Dorsolateral prefrontal cortex (tissue), 120 donors: ENCODE measurements at regions of chr16 and their contacts with region 1.

Region 1: GRCh38 chr16:89330177-89330856 is 112.8 kb downstream of the ZNF778 start:
- DNase-seq: peak in 2 of 10 donors; percentile 25 to 42
- H3K4me3 ChIP-seq: peak overlapping the region in 18 of 59 donors; percentile 3 to 35 (median 20)
- H3K27ac ChIP-seq: peak overlapping the region in 15 of 59 donors; percentile 5 to 72 (median 49)
- H3K27me3 ChIP-seq: no peaks in the 10 kb centered on the region
- CTCF ChIP-seq: no peak

Region 2: GRCh38 chr16:89374393-89374960 is 44.2 kb after region 1 on chr16:
- intact Hi-C with region 1: loop called in 1 of 2 experiments (anchors 5 kb)
- DNase-seq: peak in 7 of 10 donors; percentile 61 to 72 (median 66)
- H3K4me3 ChIP-seq: peak overlapping the region in 3 of 59 donors; percentile 4 to 21 (median 7)
- H3K27ac ChIP-seq: peak overlapping the region in 45 of 59 donors; percentile 1 to 88 (median 77)
- H3K27me3 ChIP-seq: no peaks in the 10 kb centered on the region
- CTCF ChIP-seq: peak in 41 of 56 donors; percentile 16 to 62 (median 40)

Region 3: DNA sequence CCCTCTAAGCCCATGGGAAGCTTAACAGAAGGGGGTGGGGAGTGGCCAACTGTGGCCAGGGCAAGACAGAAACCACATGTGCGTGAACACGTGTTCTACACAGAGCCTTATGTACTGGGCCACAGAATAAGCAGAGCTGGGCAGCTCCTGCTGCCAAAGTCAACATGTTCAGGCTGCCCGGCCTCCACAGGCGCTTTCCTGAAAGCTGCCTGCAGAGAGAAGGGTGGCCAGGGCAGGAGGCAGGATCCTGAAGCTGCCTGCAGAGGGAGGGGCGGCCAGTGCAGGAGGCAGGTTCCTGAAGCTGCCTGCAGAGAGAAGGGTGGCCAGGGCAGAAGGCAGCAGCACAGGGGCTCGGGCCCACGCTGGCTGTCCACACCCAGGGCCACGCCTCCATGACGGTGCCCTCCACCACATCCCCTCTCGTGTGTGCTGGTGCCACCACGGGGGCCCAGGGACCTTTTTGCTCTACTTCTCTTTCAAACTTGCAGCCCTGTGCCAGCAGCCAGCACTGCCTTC is 80.5 kb after region 1 on chr16:
- intact Hi-C with region 1: no loop called
- DNase-seq: peak in 4 of 10 donors; percentile 44 to 70 (median 56)
- H3K4me3 ChIP-seq: peak overlapping the region in 6 of 59 donors; percentile 2 to 15 (median 5)
- H3K27ac ChIP-seq: peak overlapping the region in 32 of 59 donors; percentile 0 to 61 (median 36)
- H3K27me3 ChIP-seq: no peaks in the 10 kb centered on the region
- CTCF ChIP-seq: peak in 7 of 56 donors; percentile 5 to 33 (median 15)

Region 4: GRCh38 chr16:89507834-89508590 is 177.7 kb after region 1 on chr16 and contains the start of gene SPG7:
- intact Hi-C with region 1: loop called (anchors 5 kb)
- DNase-seq: peak; percentile 60 to 93 (median 75)
- H3K4me3 ChIP-seq: peak within 1 kb of the TSS; percentile 66 to 100 (median 94)
- H3K27ac ChIP-seq: peak within 1 kb of the TSS; percentile 32 to 95 (median 87)
- H3K27me3 ChIP-seq: no peaks in the 10 kb centered on the region
- CTCF ChIP-seq: peak in 23 of 56 donors; percentile 3 to 56 (median 36)
- total RNA-seq, gene SPG7: 115 to 276 (median 151) TPM